CD4-positive, alpha-beta memory T cell (primary cell): ENCODE measurements at regions of chr10 and their contacts with region 1.

Region 1: DNA sequence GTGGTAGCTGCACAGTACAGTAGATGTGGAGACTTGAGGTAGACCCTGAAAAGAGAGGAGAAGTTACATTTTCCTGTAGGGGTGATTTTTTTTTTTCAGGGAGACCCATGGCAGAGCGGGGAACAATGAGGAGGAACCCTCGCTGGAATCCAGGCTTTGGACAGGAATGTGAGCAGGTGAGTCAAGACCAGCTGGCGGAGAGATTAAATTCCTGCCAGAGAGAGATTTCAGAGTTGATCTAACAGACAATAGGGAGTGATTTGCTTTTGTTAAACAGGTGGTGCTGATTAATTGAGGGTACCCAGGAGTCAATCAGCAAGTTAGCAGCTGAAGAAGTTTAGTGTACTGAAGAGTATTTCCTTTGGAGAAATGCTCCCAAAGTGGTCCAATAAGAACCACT is 41.6 kb upstream of the MINDY3 start:
- DNase-seq: no peak
- H3K4me3 ChIP-seq: no peak overlapping the region
- H3K4me3 Mint-ChIP-seq: no peak overlapping the region
- H3K27ac ChIP-seq: no peak overlapping the region
- H3K27ac Mint-ChIP-seq: no peak overlapping the region
- H3K4me1 ChIP-seq: no peaks in the 10 kb centered on the region
- H3K4me1 Mint-ChIP-seq: peaks cover 0 to 1% (median 0%) of the 10 kb centered on the region in 4 donors
- H3K27me3 ChIP-seq: peaks cover 7% of the 10 kb centered on the region
- H3K27me3 Mint-ChIP-seq: peaks cover 19 to 29% of the 10 kb centered on the region in 2 donors

Region 2: GRCh38 chr10:15879058-15879457 is 22.8 kb before region 1 on chr10:
- CTCF ChIA-PET with region 1: interaction called, 11 read pairs
- POLR2A ChIA-PET with region 1: no interaction called
- intact Hi-C with region 1: no loop called
- DNase-seq: peak in 4 of 5 donors; percentile 21 to 39 (median 30)
- H3K4me3 ChIP-seq: no peak overlapping the region
- H3K4me3 Mint-ChIP-seq: no peak overlapping the region
- H3K27ac ChIP-seq: no peak overlapping the region
- H3K27ac Mint-ChIP-seq: no peak overlapping the region
- H3K4me1 ChIP-seq: no peaks in the 10 kb centered on the region
- H3K4me1 Mint-ChIP-seq: no peaks in the 10 kb centered on the region
- H3K27me3 ChIP-seq: peaks cover 3% of the 10 kb centered on the region
- H3K27me3 Mint-ChIP-seq: peaks cover 33 to 52% of the 10 kb centered on the region in 2 donors

Region 3: GRCh38 chr10:16809074-16809718 is 907.3 kb after region 1 on chr10:
- CTCF ChIA-PET with region 1: interaction called, 10 read pairs
- POLR2A ChIA-PET with region 1: no interaction called
- intact Hi-C with region 1: loop called (anchors 1 kb)
- DNase-seq: peak in 4 of 5 donors; percentile 37 to 49 (median 42)
- H3K4me3 ChIP-seq: no peak overlapping the region
- H3K4me3 Mint-ChIP-seq: no peak overlapping the region
- H3K27ac ChIP-seq: no peak overlapping the region
- H3K27ac Mint-ChIP-seq: peak overlapping the region in 3 of 7 donors; percentile 20 to 44 (median 21)
- H3K4me1 ChIP-seq: peaks cover 7% of the 10 kb centered on the region
- H3K4me1 Mint-ChIP-seq: peaks cover 19 to 35% (median 26%) of the 10 kb centered on the region in 4 donors
- H3K27me3 ChIP-seq: no peaks in the 10 kb centered on the region
- H3K27me3 Mint-ChIP-seq: no peaks in the 10 kb centered on the region